Activated CD8-positive, alpha-beta T cell treated with anti-CD3 and anti-CD28 coated beads, Interleukin-2, amount 10 ng/mL, durations not matched to agents 7 days and 5 days (primary cell): ENCODE measurements at regions of chr6 and their contacts with region 1.

Region 1: GRCh38 chr6:43013843-43014433 is at the starts of genes KLHDC3 and MEA1:
- DNase-seq: peak; percentile 100
- ATAC-seq: peak; percentile 95
- H3K4me3 Mint-ChIP-seq: peak within 1 kb of the TSS; percentile 97
- H3K27ac Mint-ChIP-seq: peak within 1 kb of the TSS; percentile 90
- H3K4me1 Mint-ChIP-seq: peaks cover 43% of the 10 kb centered on the region
- H3K27me3 Mint-ChIP-seq: no peaks in the 10 kb centered on the region
- total RNA-seq, gene KLHDC3: 75.4 to 76.0 TPM
- total RNA-seq, gene MEA1: 77.1 to 84.1 TPM

Region 2: DNA sequence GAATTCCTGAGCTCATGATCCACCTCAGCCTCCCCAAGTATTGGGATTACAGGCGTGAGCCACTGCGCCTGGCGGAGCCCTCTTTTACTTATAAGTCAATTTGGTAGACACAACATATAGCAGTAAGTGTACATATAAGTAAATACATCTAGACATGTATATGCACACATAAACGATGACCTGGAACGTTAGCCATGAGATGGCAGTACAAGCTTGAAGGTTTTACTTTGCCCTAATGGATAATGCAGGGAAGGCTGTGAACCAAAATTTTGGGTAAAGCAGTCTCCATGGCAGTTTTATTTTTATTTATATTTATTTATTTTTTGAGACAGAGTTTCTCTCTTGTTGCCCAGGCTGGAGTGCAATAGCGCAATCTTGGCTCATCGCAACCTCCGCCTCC is 55.8 kb before region 1 on chr6:
- CTCF ChIA-PET with region 1: no interaction called
- POLR2A ChIA-PET with region 1: no interaction called
- DNase-seq: no peak
- ATAC-seq: no peak
- H3K4me3 Mint-ChIP-seq: no peak overlapping the region
- H3K27ac Mint-ChIP-seq: no peak overlapping the region
- H3K4me1 Mint-ChIP-seq: peaks cover 13% of the 10 kb centered on the region
- H3K27me3 Mint-ChIP-seq: peaks cover 4% of the 10 kb centered on the region

Region 3: DNA sequence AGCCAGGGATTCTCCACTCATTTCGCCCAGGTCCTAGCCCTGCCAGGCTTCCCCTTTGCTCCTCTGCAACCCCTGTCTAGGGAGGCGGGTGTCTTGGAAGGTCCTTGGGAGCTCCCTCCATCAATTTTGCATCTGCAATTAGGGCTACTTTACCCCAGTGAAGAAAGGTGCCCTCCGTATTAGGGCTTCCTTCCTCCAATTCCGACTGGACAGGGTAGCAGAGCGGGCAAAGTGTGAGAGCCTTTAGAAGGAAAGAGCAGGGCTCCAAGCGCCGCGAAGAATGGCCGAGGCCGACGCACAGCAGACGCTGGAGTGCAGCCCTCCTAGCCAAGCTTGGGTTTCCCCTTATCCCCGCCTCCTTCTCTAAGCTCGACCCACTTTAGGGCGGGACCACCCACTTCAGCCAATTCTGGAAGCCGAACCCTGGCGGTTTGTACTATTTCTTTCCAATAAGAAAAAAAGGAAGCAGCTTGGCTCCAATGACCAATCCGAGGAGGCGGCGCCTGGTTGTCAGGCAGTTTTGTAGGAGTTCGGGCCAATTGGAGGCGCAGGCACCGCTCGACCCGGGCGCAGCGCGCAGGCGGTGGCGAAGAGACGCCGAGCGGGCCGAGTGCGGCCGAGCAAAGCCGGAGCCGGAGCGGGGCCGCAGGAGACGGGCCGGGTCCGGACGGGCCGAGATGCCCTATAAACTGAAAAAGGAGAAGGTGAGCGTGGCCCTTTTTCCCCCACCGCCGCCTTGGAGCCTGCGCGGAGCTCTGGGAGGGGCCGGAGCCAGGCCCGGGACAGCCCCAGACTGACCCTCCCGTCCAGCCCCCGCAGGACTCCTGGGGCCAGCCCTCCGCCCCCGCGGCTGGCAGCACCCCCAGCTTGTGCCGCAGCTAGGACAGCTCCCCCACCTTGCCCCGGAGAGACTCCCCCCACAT is 29.7 kb before region 1 on chr6 and contains the start of gene PPP2R5D:
- CTCF ChIA-PET with region 1: interaction called, 4 read pairs
- POLR2A ChIA-PET with region 1: interaction called, 22 read pairs
- DNase-seq: peak; percentile 99
- ATAC-seq: peak; percentile 96
- H3K4me3 Mint-ChIP-seq: peak within 1 kb of the TSS; percentile 88
- H3K27ac Mint-ChIP-seq: peak within 1 kb of the TSS; percentile 90
- H3K4me1 Mint-ChIP-seq: peaks cover 51% of the 10 kb centered on the region
- H3K27me3 Mint-ChIP-seq: no peaks in the 10 kb centered on the region
- total RNA-seq, gene PPP2R5D: 63.1 to 66.5 TPM